ENCODE measurements at regions of chr12 and their contacts with region 1.

Region 1: GRCh38 chr12:6688999-6689882 is at the start of gene ZNF384:
- DNase-seq: peak; percentile 98 to 99 (median 98)
- H3K4me3 ChIP-seq: peak within 1 kb of the TSS; percentile 58 to 96 (median 87)
- H3K27ac ChIP-seq: peak within 1 kb of the TSS; percentile 85 to 95
- H3K4me1 ChIP-seq: peaks cover 12 to 44% (median 38%) of the 10 kb centered on the region in 4 experiments
- H3K27me3 ChIP-seq: no peaks in the 10 kb centered on the region

Region 2: GRCh38 chr12:6392504-6393077 is 296.6 kb before region 1 on chr12:
- CTCF ChIA-PET with region 1: no interaction called
- POLR2A ChIA-PET with region 1: no interaction called
- DNase-seq: peak in 2 of 3 donors; percentile 15 to 34
- H3K4me3 ChIP-seq: no peak overlapping the region
- H3K27ac ChIP-seq: peak overlapping the region in 1 of 2 experiments; percentile 63
- H3K4me1 ChIP-seq: peaks cover 0 to 4% (median 2%) of the 10 kb centered on the region in 4 experiments
- H3K27me3 ChIP-seq: no peaks in the 10 kb centered on the region

Region 3: DNA sequence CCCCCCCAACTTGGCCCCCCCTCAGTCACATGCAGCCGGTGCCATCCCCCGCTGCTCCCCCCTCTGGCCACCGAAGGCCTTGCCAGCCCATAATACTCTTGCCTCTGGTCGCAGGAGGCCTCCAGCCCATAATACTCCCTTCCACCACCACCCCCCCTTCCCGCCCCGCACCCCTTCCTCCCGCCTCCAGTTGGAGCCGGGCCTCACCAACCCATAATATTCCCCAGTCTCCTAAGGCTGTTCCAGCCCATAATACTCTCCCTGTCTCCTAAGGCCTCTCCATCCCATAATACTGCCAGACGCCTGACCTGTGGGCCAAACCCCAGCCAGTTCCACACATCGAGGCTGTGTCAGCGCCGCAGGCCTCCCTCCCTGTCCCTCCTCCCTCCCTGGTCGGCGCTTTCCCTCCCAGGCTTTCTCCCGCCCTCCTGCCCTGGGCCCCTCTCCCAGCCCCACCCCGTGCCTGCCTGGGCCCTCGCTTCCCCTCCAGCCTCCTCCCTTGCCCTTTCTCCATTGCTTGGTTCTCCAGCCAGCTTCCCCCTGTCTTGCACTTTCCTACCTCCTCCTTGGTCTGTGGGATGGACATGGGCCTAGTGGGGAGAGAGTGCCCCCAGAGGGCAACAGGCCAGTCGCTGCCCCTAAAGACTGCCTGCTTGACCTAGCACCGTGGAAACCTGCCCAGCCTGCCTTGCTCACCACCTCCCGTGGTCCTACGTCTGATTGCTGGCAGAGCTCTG is 75.3 kb before region 1 on chr12:
- CTCF ChIA-PET with region 1: interaction called, 59 read pairs
- POLR2A ChIA-PET with region 1: interaction called, 14 read pairs
- DNase-seq: peak; percentile 96 to 99 (median 98)
- H3K4me3 ChIP-seq: no peak overlapping the region
- H3K27ac ChIP-seq: peak overlapping the region in 1 of 2 experiments; percentile 72
- H3K4me1 ChIP-seq: peaks cover 16 to 65% (median 49%) of the 10 kb centered on the region in 4 experiments
- H3K27me3 ChIP-seq: no peaks in the 10 kb centered on the region

Region 4: GRCh38 chr12:6662906-6663742 is 26.1 kb before region 1 on chr12 and contains the start of gene ING4:
- CTCF ChIA-PET with region 1: interaction called, 39 read pairs
- POLR2A ChIA-PET with region 1: interaction called, 6 read pairs
- DNase-seq: peak; percentile 99 to 100 (median 99)
- H3K4me3 ChIP-seq: peak within 1 kb of the TSS; percentile 57 to 95 (median 87)
- H3K27ac ChIP-seq: peak within 1 kb of the TSS; percentile 90 to 91
- H3K4me1 ChIP-seq: peaks cover 8 to 16% (median 13%) of the 10 kb centered on the region in 4 experiments
- H3K27me3 ChIP-seq: no peaks in the 10 kb centered on the region

Region 5: GRCh38 chr12:6708960-6709394 is 19.7 kb after region 1 on chr12:
- CTCF ChIA-PET with region 1: no interaction called
- POLR2A ChIA-PET with region 1: no interaction called
- DNase-seq: peak in 1 of 3 donors; percentile 39
- H3K4me3 ChIP-seq: no peak overlapping the region
- H3K27ac ChIP-seq: no peak overlapping the region
- H3K4me1 ChIP-seq: peaks cover 0 to 2% (median under 1%) of the 10 kb centered on the region in 4 experiments
- H3K27me3 ChIP-seq: peaks cover 0 to 13% (median 2%) of the 10 kb centered on the region in 5 experiments

Region 6: GRCh38 chr12:6723607-6724396 is 34.6 kb after region 1 on chr12 and contains the start of gene COPS7A:
- CTCF ChIA-PET with region 1: interaction called, 6 read pairs
- POLR2A ChIA-PET with region 1: interaction called, 33 read pairs
- DNase-seq: peak; percentile 99 to 100 (median 100)
- H3K4me3 ChIP-seq: peak within 1 kb of the TSS; percentile 37 to 91 (median 75)
- H3K27ac ChIP-seq: peak within 1 kb of the TSS; percentile 51 to 87
- H3K4me1 ChIP-seq: peaks cover 8 to 23% (median 13%) of the 10 kb centered on the region in 4 experiments
- H3K27me3 ChIP-seq: no peaks in the 10 kb centered on the region

Region 7: DNA sequence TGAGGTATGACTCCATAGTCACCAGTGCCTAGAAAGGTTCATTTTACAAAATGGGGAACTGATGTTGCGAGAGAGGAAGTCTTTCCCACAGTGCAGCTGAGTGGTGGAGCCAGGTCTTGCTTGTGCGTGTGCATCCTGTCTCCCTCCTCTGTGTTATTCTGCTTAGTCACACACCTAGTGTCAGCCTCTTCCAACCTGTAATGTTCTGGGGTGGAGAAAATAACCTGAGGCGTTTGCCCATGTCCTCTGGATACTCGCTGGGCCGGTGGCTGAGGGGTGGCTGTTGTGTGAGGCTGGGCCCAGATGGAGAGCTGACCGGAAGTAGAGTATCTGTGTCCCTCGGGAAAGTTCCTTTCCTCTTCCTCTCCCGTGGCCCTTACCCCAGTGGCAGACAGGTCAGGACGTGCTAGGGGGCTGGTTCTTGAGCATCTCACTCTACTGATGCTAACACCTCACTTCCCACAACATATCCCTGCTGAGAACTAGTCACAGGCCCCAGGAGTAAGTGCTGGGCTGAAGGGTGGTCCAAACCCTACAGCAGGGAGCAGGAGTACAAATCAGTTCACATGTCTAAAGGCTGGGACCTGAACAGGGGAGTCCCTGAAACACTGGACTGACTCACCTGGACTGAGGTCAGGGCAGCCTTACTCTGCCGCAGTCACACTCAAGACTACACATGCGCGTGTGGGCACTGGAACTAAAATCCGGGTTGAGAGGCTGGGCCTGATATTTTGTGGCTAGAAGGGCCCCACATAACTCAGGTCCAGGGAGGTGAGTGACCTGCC is 56.7 kb after region 1 on chr12:
- CTCF ChIA-PET with region 1: no interaction called
- POLR2A ChIA-PET with region 1: no interaction called
- DNase-seq: peak; percentile 88 to 98 (median 97)
- H3K4me3 ChIP-seq: peak overlapping the region in 1 of 7 experiments; percentile 61
- H3K27ac ChIP-seq: peak overlapping the region; percentile 84 to 92
- H3K4me1 ChIP-seq: peaks cover 4 to 26% (median 21%) of the 10 kb centered on the region in 4 experiments
- H3K27me3 ChIP-seq: no peaks in the 10 kb centered on the region

Region 8: GRCh38 chr12:6764011-6764828 is 75.0 kb after region 1 on chr12:
- CTCF ChIA-PET with region 1: no interaction called
- POLR2A ChIA-PET with region 1: no interaction called
- DNase-seq: peak; percentile 92 to 96 (median 95)
- H3K4me3 ChIP-seq: peak overlapping the region in 5 of 7 experiments; percentile 10 to 71 (median 48)
- H3K27ac ChIP-seq: peak overlapping the region in 1 of 2 experiments; percentile 64
- H3K4me1 ChIP-seq: peaks cover 8 to 44% (median 31%) of the 10 kb centered on the region in 4 experiments
- H3K27me3 ChIP-seq: peaks cover 0 to 16% (median 0%) of the 10 kb centered on the region in 5 experiments

Region 9: GRCh38 chr12:6851921-6852650 is 162.8 kb after region 1 on chr12 and contains the start of gene USP5:
- CTCF ChIA-PET with region 1: no interaction called
- POLR2A ChIA-PET with region 1: interaction called, 14 read pairs
- DNase-seq: peak; percentile 100
- H3K4me3 ChIP-seq: peak within 1 kb of the TSS; percentile 82 to 99 (median 90)
- H3K27ac ChIP-seq: peak within 1 kb of the TSS; percentile 80 to 89
- H3K4me1 ChIP-seq: peaks cover 5 to 41% (median 32%) of the 10 kb centered on the region in 4 experiments
- H3K27me3 ChIP-seq: no peaks in the 10 kb centered on the region